ENCODE measurements at regions of chr5 and their contacts with region 1.

Region 1: DNA sequence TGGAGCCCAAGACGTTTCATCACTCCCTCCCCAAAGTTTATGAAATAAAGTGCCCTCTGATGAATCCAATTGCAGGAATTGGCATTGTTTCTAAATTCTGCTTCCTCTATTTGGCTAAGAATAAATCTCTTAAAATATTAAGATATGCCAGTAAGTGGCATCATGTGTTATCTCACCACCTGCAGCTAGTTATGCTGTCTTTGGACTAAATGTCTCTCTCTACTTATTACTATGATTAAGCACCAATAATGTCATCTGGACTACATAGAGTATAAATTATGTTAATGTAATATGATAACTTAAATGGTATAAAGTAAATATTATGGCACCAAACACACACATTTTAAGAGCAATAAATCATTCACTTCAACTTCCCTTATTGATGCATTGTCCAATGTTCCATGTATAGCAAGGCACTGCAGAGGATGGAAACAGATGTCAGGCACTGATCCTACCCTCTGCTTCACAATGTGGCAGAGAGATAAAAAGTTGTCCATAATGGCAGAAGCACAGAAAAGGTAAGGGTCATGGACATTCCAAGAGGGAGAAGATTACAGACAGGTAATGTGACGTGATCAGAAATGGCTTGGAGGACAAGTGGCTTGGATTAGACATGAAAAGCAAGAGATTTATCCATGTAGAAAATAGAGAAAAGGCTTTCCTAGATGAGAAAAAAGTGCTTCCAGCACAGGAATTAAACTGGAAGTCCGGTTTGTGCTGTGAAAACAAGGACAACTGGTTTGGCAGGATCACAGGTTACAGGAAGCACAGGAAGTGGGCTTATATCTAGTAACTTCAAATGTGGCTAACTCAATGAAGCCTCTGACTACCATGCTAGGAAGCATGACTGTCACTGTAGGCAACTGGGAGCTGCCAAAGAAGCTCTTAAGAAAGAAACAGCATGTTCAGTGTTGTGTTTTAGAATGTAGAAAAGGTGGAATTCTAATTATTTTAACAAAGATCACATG is 26.7 kb downstream of the MARCHF11 start:
- DNase-seq: peak; percentile 29
- H3K4me3 ChIP-seq: no peak overlapping the region
- H3K27ac ChIP-seq: peak overlapping the region in 1 of 2 experiments; percentile 97; a peak in 2 of 4 replicates
- H3K4me1 ChIP-seq: peaks cover 0 to 27% of the 10 kb centered on the region in 2 experiments; a peak in 2 of 4 replicates
- H3K27me3 ChIP-seq: no peaks in the 10 kb centered on the region
- CTCF ChIP-seq: no peak
- EP300 ChIP-seq: peak; percentile 25 to 97; a peak in 3 of 4 replicates
- RAD21 ChIP-seq: peak; percentile 17

Region 2: DNA sequence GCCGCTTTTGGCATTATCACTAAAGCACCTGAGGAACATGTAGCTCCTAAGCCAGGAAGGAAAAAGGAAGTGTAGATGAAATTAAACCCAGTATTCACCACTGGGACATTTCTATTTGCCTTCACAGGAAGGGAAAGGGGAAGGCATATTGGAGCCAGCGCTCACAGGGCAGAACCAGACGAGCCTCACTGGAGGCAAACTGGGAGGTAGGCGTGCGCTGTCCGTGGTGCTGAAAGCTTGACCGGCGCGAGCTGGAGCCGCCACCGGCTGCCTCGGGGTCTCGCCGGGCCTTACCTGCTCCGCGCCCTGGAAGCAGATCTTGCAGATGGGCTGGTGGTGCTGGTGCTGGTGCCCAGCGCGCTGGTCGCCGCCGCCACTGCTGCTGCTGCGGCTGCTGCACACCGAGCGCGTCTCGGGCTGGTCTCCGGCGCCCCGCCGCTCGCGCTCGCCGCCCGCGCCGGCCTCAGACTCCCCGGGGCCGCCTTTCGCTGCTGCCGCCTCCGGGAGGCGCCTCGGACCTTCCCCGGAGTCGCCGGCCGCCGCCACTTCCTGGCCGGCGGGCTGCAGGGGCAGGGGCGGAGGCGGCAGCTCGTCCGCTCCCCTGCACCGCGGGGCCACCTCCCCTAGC is 26.0 kb after region 1 on chr5:
- CTCF ChIA-PET with region 1: no interaction called
- POLR2A ChIA-PET with region 1: interaction called, 10 read pairs
- DNase-seq: peak; percentile 73
- H3K4me3 ChIP-seq: peak overlapping the region; percentile 48 to 56; a peak in 3 of 4 replicates
- H3K27ac ChIP-seq: peak overlapping the region in 1 of 2 experiments; percentile 96; a peak in 2 of 4 replicates
- H3K4me1 ChIP-seq: peaks cover 0 to 22% of the 10 kb centered on the region in 2 experiments; a peak in 2 of 4 replicates
- H3K27me3 ChIP-seq: peaks cover 6% of the 10 kb centered on the region; the same call in 1 of the 2 replicates
- CTCF ChIP-seq: 0 out of 2 replicates have a peak, but pooled peaks have one; percentile 8
- EP300 ChIP-seq: no peak
- RAD21 ChIP-seq: peak; percentile 8; the same call in 1 of the 2 replicates

Region 3: DNA sequence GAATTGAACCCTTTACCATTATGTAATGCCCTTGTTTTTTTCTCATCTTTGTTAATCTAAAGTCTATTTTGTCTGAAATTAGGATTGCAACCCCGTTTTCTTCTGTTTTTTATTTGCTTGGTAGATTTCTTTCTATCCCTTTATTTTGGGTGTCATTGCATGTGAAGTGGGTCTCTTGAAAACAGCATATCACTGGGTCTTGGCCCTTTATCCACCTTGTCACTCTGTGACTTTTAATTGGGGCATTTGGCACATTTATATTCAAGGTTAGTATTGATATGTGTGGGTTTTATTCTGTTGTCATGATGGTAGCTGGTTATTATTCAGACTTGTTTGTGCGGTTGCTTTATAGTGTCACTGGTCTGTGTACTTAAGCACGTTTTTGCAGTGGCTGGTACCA is 144.1 kb after region 1 on chr5:
- CTCF ChIA-PET with region 1: no interaction called
- POLR2A ChIA-PET with region 1: no interaction called
- DNase-seq: no peak
- H3K4me3 ChIP-seq: no peak overlapping the region
- H3K27ac ChIP-seq: no peak overlapping the region
- H3K4me1 ChIP-seq: no peaks in the 10 kb centered on the region
- H3K27me3 ChIP-seq: no peaks in the 10 kb centered on the region
- CTCF ChIP-seq: no peak
- EP300 ChIP-seq: no peak
- RAD21 ChIP-seq: no peak

Region 4: DNA sequence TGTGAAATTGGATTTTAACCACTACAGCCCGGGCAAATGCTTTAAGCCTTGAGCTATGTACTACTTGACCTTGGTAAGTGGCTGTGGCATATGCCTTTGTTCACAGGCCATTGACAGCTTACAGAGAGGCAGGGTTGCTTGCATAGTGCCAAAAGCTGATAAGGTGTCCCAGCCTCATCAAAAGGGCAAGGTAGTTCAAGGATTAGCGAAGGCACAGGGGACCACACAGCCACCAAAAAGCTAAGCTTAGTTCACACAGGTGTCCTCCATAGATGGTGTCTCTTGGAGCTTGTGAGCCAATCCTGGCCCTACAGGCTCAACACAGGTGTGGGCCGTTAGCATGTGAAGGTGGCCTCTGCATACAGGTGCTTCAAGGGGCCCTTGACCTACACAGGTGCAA is 225.9 kb after region 1 on chr5:
- CTCF ChIA-PET with region 1: no interaction called
- POLR2A ChIA-PET with region 1: no interaction called
- DNase-seq: no peak
- H3K4me3 ChIP-seq: no peak overlapping the region
- H3K27ac ChIP-seq: no peak overlapping the region
- H3K4me1 ChIP-seq: peaks cover 0 to 4% of the 10 kb centered on the region in 2 experiments; a peak in 2 of 4 replicates
- H3K27me3 ChIP-seq: no peaks in the 10 kb centered on the region
- CTCF ChIP-seq: no peak
- EP300 ChIP-seq: no peak
- RAD21 ChIP-seq: no peak

Region 5: DNA sequence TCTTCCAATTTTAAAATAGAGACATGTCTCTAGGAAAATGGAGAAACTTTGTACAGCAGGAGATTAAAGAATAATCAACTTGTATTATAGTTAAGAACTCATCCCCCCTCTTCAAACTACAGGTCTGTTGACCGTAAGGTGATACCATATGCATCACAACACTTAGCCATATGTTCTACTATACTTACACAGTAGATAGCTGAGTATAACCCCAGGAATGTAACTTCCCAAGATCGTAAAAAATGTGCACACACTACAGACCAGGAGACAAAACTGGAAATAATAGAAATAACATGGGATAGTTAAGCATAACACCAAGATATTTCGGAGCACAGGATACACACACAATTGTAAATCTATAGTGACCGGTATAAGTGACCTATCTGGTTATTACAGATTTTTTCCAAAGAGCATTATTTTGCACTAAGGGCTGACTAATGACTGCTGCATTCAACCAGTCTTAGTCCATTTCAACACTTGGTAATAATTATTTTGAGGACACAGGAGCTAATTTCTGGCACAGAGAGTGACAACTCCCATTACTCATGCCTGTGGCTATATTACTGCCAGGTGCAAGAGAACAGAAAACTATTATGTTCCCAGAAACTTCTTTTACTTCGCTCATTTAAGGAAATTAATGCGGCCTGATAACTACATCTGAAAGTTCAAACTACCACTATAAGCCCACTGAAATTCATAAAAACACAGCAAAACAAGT is 328.1 kb after region 1 on chr5:
- CTCF ChIA-PET with region 1: no interaction called
- POLR2A ChIA-PET with region 1: no interaction called
- DNase-seq: no peak
- H3K4me3 ChIP-seq: no peak overlapping the region
- H3K27ac ChIP-seq: no peak overlapping the region; a peak in 1 of 4 replicates
- H3K4me1 ChIP-seq: no peaks in the 10 kb centered on the region; a peak in 1 of 4 replicates
- H3K27me3 ChIP-seq: no peaks in the 10 kb centered on the region
- CTCF ChIP-seq: no peak
- EP300 ChIP-seq: no peak
- RAD21 ChIP-seq: no peak